Psoas muscle (tissue), 8 donors: ENCODE measurements at regions of chr1 and their contacts with region 1.

Region 1: GRCh38 chr1:226634166-226634588 is 85.6 kb downstream of the STUM start:
- DNase-seq: peak; percentile 78 to 92
- ATAC-seq: peak; percentile 83 to 90 (median 86)
- H3K4me3 ChIP-seq: no peak overlapping the region
- H3K27ac ChIP-seq: peak overlapping the region; percentile 30
- H3K4me1 ChIP-seq: peaks cover 20% of the 10 kb centered on the region
- H3K27me3 ChIP-seq: no peaks in the 10 kb centered on the region
- CTCF ChIP-seq: peak; percentile 97

Region 2: DNA sequence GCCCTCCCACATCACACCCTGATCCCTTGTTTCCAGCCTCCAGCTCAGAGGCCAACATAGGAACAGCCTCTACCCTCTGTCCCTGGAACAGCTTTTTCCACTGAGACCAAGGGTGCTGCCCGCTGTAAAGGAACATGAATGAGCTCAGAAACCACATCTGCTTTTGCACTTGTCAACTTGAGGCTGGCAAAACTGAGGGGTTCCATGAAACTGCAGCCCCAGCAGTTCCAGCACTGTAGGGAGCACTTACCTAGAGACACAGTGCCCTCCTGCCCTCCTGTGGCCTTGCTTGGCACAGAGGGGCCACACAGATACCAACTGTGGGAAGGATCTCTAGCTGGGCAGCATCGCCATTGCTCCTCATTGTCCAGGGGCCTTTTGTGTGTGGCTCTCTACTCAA is 53.2 kb after region 1 on chr1:
- intact Hi-C with region 1: loop called (anchors 2 to 5 kb)
- DNase-seq: no peak
- ATAC-seq: peak; percentile 64 to 85 (median 83)
- H3K4me3 ChIP-seq: no peak overlapping the region
- H3K27ac ChIP-seq: peak overlapping the region; percentile 10
- H3K4me1 ChIP-seq: peaks cover 71% of the 10 kb centered on the region
- H3K27me3 ChIP-seq: no peaks in the 10 kb centered on the region
- CTCF ChIP-seq: peak; percentile 32

Region 3: DNA sequence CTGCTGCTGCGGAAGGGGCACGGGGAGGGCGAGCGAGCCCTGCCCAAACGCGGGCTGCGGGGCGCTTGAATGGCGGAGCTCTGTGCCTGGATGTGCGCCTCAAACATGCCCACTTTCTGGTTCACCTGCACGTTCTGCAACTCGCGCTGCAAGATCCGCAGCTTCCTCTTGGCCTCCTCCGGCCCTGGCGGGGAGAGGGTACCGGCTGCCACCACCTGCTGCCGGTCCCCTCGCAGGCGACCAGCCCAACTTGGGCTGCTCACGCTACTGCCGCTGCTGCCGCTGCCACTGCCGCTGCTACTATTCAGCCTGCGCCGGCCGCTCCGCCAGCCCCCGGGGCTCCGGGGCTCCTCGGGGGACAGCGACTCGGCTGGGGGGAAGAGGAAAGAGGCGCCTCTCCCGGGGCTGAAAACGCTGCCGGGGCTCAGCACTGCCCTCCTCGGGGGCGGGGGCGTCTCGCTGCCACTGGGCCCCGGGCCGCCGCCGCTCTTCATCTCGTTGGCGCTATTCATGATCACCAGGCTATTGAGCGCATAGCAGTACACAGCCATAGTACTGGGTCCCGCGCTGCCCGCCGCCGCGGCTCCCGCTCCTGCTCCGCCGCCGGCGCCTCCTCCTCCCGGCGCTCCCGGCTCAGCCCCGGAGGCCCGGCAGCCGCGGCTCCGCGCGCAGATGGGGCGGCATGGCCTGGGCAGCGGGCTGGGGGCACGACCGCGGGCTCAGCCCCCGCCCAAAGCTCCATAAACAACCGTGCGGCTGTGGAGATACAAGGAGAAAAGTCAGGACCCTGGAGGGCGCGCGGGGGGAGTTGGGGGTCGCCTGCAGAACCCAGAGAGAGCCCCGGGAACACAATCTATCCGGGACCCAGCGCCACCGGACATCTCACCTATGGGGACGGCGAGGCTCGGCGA is 103.0 kb after region 1 on chr1:
- intact Hi-C with region 1: loop called (anchors 5 kb)
- DNase-seq: peak; percentile 49 to 79
- ATAC-seq: peak; percentile 57 to 73 (median 64)
- H3K4me3 ChIP-seq: peak overlapping the region; percentile 94
- H3K27ac ChIP-seq: peak overlapping the region; percentile 87
- H3K4me1 ChIP-seq: peaks cover 23% of the 10 kb centered on the region
- H3K27me3 ChIP-seq: no peaks in the 10 kb centered on the region
- CTCF ChIP-seq: peak; percentile 16

Region 4: GRCh38 chr1:226827968-226828513 is 193.9 kb after region 1 on chr1:
- intact Hi-C with region 1: loop called (anchors 1 to 2 kb)
- DNase-seq: peak; percentile 96 to 98
- ATAC-seq: peak; percentile 98 to 99 (median 99)
- H3K4me3 ChIP-seq: peak overlapping the region; percentile 48
- H3K27ac ChIP-seq: peak overlapping the region; percentile 74
- H3K4me1 ChIP-seq: peaks cover 10% of the 10 kb centered on the region
- H3K27me3 ChIP-seq: no peaks in the 10 kb centered on the region
- CTCF ChIP-seq: peak; percentile 98